ENCODE measurements at regions of chr21 and their contacts with region 1.

Region 1: DNA sequence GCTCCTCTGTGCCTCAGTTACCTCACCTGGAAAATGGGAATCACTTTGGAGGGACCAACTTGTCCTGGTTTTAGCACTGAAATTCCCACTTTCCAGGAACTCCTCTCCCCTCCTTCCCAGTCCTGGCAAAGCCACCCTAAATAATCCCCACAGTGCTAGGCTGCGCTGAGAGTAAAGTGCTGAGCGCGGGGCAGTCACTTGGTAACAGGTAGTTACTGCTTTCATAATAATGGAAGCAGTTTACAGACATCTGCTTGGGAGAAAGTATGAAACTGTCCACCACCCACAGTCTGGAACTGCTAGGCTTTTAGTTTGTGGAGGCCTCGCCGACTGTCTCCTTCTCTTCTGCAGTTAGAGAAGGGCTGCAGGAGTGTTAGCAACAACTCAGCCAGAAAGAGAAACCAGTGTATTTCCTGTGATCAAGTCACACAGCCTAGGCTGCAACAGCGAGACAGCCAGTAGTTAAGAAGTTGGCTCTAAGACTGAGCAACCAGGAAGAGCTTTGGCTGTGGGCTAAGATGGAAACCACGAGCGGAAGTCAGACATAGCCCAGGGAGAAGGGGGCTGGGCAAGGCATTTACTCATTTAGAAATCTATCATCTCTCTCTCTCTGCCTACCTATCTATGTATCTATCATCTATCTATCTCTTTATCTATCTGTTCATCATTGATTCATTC is 30.8 kb upstream of the ABCG1 start:
- DNase-seq: peak; percentile 81
- H3K4me3 Mint-ChIP-seq: peak overlapping the region; percentile 68
- H3K27ac Mint-ChIP-seq: peak overlapping the region; percentile 89
- H3K4me1 Mint-ChIP-seq: peaks cover 70% of the 10 kb centered on the region
- H3K27me3 Mint-ChIP-seq: no peaks in the 10 kb centered on the region

Region 2: GRCh38 chr21:42002421-42002958 is 185.6 kb before region 1 on chr21:
- intact Hi-C with region 1: loop called (anchors 5 kb)
- DNase-seq: peak; percentile 78
- H3K4me3 Mint-ChIP-seq: peak overlapping the region; percentile 34
- H3K27ac Mint-ChIP-seq: peak overlapping the region; percentile 85
- H3K4me1 Mint-ChIP-seq: peaks cover 58% of the 10 kb centered on the region
- H3K27me3 Mint-ChIP-seq: no peaks in the 10 kb centered on the region

Region 3: DNA sequence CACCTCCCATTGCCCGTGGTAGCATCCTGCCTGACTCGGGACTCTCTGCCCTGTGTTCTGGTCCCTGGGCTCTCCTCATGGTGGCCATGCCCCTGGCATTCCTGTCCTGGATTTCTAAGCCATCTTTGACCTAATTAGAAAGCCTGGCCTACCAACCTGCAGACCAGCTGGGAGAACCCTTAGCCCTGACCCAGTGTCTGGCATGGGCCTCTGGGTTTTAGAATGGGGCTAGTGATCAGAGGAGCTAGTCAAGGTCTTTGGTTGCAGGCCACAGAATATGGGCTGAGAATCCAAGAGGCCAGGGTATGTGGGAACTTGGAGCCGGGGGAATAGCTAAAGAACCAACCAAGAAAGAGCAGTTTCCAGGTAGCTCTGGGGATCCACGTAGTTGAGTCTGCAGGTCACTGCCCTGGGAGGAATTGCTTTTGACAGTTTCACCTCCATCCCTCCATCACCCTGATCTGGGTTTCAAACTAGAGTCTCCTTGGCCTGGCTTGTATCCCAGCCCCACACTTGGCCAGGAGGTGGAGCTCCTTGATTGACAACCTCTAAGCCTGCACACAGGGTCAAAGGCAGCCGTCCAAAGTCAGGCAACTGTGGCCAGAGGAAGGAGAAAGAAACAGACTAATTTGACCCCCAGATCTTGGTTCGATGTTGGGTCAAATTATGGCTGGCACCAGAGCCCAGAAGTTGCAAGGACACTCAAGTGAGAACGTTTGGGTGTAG is 23.9 kb before region 1 on chr21:
- intact Hi-C with region 1: loop called (anchors 1 kb)
- DNase-seq: peak; percentile 46
- H3K4me3 Mint-ChIP-seq: no peak overlapping the region
- H3K27ac Mint-ChIP-seq: peak overlapping the region; percentile 14
- H3K4me1 Mint-ChIP-seq: peaks cover 7% of the 10 kb centered on the region
- H3K27me3 Mint-ChIP-seq: peaks cover 4% of the 10 kb centered on the region

Region 4: DNA sequence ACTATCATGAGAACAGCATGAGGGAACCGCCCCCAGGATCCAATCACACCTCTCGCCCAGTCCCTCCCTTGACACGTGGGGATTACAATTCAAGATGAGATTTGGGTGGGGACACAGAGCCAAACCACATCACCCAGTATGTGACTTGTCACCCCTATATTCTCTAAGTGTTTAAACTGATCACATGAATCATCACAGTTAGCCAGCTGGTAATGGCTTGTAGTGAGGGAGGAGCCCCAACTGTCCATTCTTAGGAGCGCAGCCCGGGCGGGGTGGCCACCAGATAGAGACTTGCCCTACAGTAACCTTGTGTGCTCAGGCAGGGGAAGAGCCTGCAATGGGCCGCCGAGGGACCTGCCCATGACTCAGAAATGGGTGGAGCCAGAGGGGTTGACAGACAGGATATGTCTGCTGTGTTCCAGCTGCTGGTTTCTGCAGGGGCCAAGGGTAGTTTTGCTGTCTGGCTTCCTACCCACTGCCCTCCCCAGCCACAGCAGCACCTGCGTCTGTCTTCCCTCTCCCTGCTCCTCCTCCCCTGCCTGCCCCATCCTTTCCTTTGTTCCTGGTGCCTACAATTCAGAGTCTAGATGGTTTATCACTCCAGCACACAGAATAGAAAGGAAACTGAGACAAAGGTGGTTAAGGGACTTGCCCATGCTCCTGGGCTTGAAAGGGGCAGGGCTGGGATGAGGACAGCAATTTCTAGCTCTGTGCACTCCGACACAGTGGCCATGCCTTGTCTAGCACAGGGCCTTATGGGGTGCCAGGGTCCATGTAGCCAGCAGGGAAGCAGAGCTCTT is 40.0 kb after region 1 on chr21:
- intact Hi-C with region 1: loop called (anchors 1 kb)
- DNase-seq: peak; percentile 89
- H3K4me3 Mint-ChIP-seq: peak overlapping the region; percentile 34
- H3K27ac Mint-ChIP-seq: peak overlapping the region; percentile 87
- H3K4me1 Mint-ChIP-seq: peaks cover 84% of the 10 kb centered on the region
- H3K27me3 Mint-ChIP-seq: no peaks in the 10 kb centered on the region

Region 5: GRCh38 chr21:42424914-42425541 is 236.9 kb after region 1 on chr21:
- intact Hi-C with region 1: loop called (anchors 1 kb)
- DNase-seq: peak; percentile 74
- H3K4me3 Mint-ChIP-seq: peak overlapping the region; percentile 76
- H3K27ac Mint-ChIP-seq: peak overlapping the region; percentile 95
- H3K4me1 Mint-ChIP-seq: peaks cover 67% of the 10 kb centered on the region
- H3K27me3 Mint-ChIP-seq: no peaks in the 10 kb centered on the region